ENCODE measurements at regions of chr18 and their contacts with region 1.

Region 1: DNA sequence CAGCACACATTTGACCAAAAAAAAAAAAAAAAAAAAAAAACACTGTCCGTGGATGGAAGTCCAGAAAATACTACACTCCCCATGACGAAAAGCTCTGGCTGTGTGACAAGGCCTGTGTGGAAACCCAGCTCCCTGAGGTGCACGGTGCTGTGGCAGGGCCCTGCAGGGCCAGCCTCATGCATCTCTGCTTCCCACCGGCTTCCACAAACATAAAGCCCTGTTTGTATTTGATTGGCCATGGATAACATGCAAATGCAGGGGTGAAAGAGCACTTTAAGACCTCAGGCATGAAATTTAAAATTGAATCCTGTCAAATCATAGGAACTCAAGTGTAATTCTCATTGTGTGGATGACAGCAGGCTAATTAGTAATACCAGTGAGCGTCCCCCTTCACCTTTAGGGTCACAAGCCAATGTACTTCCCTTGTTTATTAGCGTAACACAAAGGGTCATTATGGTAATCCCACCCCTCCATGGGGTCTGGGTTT is 757.2 kb downstream of the GALR1 start:
- DNase-seq: no peak
- H3K4me3 ChIP-seq: no peak overlapping the region
- CTCF ChIP-seq: no peak

Region 2: DNA sequence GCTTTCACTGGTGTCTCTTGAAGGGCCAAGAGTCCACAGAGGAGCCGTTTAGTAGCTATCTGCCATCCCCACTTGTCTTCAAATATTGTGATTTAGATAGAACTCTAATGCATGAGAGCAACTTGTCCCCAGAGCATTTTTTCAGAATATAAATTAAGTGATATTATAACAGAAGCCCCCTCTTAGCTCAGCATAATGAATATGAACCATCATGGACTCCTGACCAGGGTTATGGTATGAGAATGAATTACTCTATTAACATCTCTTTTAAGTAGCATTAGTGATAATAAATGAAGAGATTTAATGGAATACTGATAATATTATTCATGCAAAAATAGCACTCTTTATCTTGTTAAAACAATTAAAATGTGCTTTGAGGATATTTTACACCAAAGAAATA is 47.6 kb before region 1 on chr18:
- in situ Hi-C with region 1: loop called (anchors 5 kb)
- DNase-seq: no peak
- H3K4me3 ChIP-seq: no peak overlapping the region
- CTCF ChIP-seq: no peak

Measured in astrocyte of the cerebellum (primary cell).